ENCODE measurements at regions of chr19 and their contacts with region 1.

Region 1: DNA sequence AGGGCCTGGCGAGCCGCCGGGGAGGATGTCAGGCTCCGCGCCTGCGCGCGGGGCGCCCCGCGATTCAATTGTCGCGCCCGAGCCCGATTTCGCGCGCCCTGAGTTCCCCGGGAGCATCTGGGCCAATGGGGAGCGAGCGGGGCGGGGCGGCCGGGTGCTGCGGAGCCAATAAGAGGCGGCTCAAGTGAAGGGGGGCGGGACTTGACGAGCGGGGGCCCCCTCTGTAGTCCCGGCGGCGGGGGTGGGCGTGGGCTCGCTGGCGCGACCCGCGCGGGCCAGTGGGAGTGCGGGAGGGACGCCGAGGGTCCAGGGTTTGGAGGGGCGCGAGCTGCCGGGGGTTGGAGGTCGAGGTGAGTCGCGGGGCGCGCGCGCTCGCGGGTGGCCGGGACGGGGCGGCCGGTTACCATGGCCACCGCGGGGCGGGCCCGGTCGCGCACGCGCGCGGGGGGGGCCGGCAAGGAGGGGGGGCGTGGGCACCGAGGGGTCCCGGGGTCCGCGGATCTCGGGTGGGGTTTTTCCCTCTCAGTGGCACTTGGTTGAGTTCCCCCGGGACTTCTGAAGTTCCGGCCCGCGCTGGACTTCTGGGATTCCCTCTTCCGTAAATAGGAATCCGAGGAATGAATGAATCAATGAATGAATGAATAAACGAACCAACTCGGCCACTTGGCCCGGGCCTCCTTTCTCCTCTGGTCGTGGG is 744 bp downstream of the UHRF1 start:
- DNase-seq: peak; percentile 94 to 96 (median 95)
- ATAC-seq: peak; percentile 96
- H3K4me3 ChIP-seq: peak overlapping the region; percentile 42
- H3K4me1 ChIP-seq: peaks cover 17% of the 10 kb centered on the region
- CTCF ChIP-seq: no peak

Region 2: GRCh38 chr19:4811328-4812131 is 98.5 kb before region 1 on chr19:
- intact Hi-C with region 1: loop called in 1 of 2 experiments (anchors 5 kb)
- DNase-seq: peak; percentile 86 to 92 (median 92)
- ATAC-seq: peak; percentile 71
- H3K4me3 ChIP-seq: no peak overlapping the region
- H3K4me1 ChIP-seq: peaks cover 15% of the 10 kb centered on the region
- CTCF ChIP-seq: peak; percentile 84

Region 3: DNA sequence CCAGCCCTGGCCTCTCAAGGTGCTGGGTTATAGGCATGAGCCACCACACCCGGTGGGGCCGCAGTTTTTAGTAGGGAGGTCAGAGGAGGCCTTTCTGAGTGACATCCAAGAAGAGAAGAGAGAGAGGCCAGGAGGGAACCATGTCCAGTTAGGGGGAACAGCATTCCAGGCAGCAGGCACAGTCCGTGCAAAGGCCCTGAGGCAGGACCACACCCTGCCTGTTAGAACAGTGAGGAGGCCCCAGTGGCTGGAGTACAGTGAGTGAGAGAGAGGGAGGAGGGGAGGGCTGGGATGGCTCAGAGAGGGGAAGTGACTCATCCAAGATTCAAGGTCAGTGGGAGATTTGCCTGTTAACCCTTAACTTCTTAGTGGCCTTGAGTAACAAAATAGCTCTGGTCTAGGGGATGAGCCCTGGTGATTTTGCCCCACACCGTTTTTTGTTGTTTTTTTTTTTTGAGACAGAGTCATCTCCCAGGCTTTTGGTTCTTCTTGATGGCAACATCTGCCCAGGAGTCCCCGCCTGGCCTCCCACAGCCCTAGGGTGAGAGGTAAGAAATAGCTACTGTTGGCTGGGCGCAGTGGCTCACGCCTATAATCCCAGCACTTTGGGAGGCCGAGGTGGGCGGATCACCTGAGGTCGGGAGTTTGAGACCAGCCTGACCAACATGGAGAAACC is 39.9 kb before region 1 on chr19:
- intact Hi-C with region 1: loop called (anchors 5 kb)
- DNase-seq: peak; percentile 47 to 69 (median 60)
- ATAC-seq: peak; percentile 63
- H3K4me3 ChIP-seq: no peak overlapping the region
- H3K4me1 ChIP-seq: peaks cover 8% of the 10 kb centered on the region
- CTCF ChIP-seq: no peak

Measured in mucosa of descending colon (tissue), 3 donors.